Mammary epithelial cell (primary cell): ENCODE measurements at regions of chr16 and their contacts with region 1.

Region 1: GRCh38 chr16:58345574-58346354 is 46.5 kb upstream of the GINS3 start:
- DNase-seq: no peak
- H3K4me3 ChIP-seq: no peak overlapping the region
- H3K27ac ChIP-seq: no peak overlapping the region
- H3K4me1 ChIP-seq: no peaks in the 10 kb centered on the region
- H3K27me3 ChIP-seq: no peaks in the 10 kb centered on the region
- CTCF ChIP-seq: peak; percentile 26 to 38

Region 2: GRCh38 chr16:58280836-58281301 is 64.9 kb before region 1 on chr16:
- CTCF ChIA-PET with region 1: no interaction called
- dilution Hi-C with region 1: no loop called
- in situ Hi-C with region 1: no loop called
- intact Hi-C with region 1: no loop called
- DNase-seq: peak; percentile 55
- H3K4me3 ChIP-seq: peak overlapping the region in 1 of 3 experiments; percentile 11
- H3K27ac ChIP-seq: peak overlapping the region; percentile 85
- H3K4me1 ChIP-seq: peaks cover 19% of the 10 kb centered on the region
- H3K27me3 ChIP-seq: no peaks in the 10 kb centered on the region
- CTCF ChIP-seq: no peak

Region 3: DNA sequence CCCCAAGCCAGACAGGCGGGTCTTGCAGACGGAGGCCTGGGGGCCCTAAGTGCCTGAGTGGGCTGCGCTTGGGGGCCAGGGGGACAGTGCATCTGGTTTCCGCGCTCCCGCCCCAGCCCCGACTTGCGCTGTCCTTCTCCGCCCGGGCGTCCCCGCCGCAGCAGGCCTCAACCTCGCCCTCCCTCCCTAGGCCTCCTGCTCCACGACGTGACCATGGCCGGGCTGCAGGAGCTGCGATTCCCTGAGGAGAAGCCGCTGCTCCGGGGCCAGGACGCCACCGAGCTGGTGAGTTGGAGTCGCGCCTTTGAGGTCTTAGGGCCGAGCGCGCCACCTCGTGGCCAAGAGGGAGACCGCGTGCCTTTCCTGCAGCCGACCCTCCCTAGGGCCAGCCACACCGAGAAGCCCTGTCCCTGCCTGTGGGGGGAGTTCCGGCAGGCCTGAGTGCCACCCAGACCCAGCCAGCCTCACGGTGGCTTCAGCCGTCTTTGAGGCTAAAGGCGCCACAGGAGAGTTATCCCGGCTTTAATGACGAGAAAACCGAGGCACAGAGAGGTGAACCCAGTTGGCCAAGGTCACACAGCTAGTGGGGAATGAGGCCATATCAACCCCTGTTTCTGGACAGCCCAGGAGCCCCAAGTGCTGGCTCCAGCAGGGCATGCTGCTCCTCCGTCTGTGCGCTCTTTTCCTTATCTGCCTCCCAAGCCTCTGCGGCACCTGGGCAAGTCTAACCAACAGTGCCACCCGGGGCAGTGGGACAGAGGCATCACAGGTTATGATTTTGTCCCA is 142.0 kb after region 1 on chr16:
- CTCF ChIA-PET with region 1: interaction called, 3 read pairs
- dilution Hi-C with region 1: no loop called
- in situ Hi-C with region 1: no loop called
- intact Hi-C with region 1: loop called (anchors 1 kb)
- DNase-seq: peak; percentile 51
- H3K4me3 ChIP-seq: peak overlapping the region in 2 of 3 experiments; percentile 33 to 40
- H3K27ac ChIP-seq: no peak overlapping the region
- H3K4me1 ChIP-seq: peaks cover 5% of the 10 kb centered on the region
- H3K27me3 ChIP-seq: no peaks in the 10 kb centered on the region
- CTCF ChIP-seq: peak; percentile 69 to 94